ENCODE measurements at regions of chr3 and their contacts with region 1.

Region 1: DNA sequence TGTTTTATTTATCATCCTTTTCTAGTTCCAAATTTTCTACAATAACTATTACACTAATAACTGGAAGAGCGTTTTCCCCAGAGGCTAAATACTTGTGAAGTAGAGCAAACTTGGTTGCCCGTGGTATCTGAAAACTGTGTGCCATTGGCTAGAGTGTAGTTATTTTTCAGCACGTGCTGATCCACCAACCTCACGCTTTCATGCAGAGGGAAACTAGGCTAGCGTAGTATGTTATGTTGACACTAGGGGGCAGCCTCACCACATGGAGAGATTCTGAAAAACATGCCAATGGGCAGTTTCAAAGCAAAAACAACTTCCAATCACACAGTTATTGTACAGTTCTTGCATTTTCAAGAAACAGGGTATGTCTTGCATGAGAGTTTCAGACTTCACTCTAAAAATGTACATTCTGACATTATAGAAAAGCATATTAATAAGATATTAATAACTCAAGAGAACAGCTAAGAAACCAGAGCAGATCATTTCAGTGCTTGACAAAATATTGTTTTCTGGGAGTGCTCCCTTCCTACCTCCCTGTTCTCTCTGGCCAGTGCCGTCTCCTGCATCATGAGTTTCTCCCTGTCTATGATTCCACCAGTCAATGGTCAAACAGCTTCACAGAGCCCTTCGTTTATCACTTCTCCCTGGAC is 39.7 kb downstream of the SPATA12 start:
- DNase-seq: peak; percentile 58
- H3K4me3 ChIP-seq: no peak overlapping the region
- H3K27ac ChIP-seq: no peak overlapping the region
- H3K4me1 ChIP-seq: peaks cover 17% of the 10 kb centered on the region
- H3K27me3 ChIP-seq: no peaks in the 10 kb centered on the region
- CTCF ChIP-seq: peak; percentile 78 to 87

Region 2: GRCh38 chr3:57169872-57170623 is 69.9 kb after region 1 on chr3:
- CTCF ChIA-PET with region 1: no interaction called
- dilution Hi-C with region 1: no loop called
- in situ Hi-C with region 1: no loop called
- intact Hi-C with region 1: loop called (anchors 2 kb)
- DNase-seq: peak; percentile 48
- H3K4me3 ChIP-seq: peak overlapping the region; percentile 35 to 44 (median 41)
- H3K27ac ChIP-seq: no peak overlapping the region
- H3K4me1 ChIP-seq: peaks cover 5% of the 10 kb centered on the region
- H3K27me3 ChIP-seq: no peaks in the 10 kb centered on the region
- CTCF ChIP-seq: peak; percentile 46 to 79

Region 3: GRCh38 chr3:57221883-57222282 is 121.7 kb after region 1 on chr3:
- CTCF ChIA-PET with region 1: no interaction called
- dilution Hi-C with region 1: no loop called
- in situ Hi-C with region 1: no loop called
- intact Hi-C with region 1: loop called (anchors 1 kb)
- DNase-seq: no peak
- H3K4me3 ChIP-seq: no peak overlapping the region
- H3K27ac ChIP-seq: no peak overlapping the region
- H3K4me1 ChIP-seq: peaks cover 8% of the 10 kb centered on the region
- H3K27me3 ChIP-seq: no peaks in the 10 kb centered on the region
- CTCF ChIP-seq: peak in 1 of 2 donors; percentile 43

Region 4: GRCh38 chr3:57434041-57434440 is 333.9 kb after region 1 on chr3:
- CTCF ChIA-PET with region 1: interaction called, 24 read pairs
- dilution Hi-C with region 1: no loop called
- in situ Hi-C with region 1: no loop called
- intact Hi-C with region 1: loop called (anchors 1 kb)
- DNase-seq: peak; percentile 30
- H3K4me3 ChIP-seq: no peak overlapping the region
- H3K27ac ChIP-seq: no peak overlapping the region
- H3K4me1 ChIP-seq: no peaks in the 10 kb centered on the region
- H3K27me3 ChIP-seq: no peaks in the 10 kb centered on the region
- CTCF ChIP-seq: peak; percentile 61 to 71

Region 5: DNA sequence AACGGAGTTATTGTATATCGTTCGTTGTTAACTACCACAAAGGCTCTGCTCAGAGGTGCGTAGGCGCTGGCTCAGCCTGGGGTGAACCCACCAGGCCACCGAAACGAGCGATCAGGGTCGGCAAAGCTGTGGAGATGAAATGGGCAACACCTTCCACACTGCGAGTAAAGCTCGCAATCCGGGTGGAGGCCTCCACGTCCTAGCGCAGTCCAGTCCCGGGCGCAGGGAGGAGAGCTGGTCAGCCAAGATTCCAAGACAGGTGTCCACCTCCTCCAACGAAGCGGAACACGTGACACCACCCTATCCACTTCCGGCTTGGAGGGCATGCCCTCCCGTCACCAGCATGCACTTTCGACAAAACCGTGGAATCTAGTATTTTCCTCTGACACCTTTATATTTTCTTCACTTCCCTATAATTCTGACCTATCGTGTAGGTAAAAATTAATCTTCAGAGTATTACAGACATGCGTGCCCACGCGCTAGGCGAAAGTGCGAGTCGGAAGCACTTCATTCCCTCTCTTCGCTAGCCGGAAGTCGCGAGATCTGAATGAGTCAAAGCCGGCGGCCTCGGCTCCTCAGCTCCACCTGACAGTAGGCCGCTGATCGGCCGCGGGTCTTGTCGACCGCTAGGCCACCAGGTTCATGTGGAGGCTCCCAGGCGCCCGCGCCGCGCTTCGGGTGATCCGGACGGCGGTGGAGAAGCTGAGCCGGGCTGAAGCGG is 455.7 kb after region 1 on chr3 and contains the start of gene PDE12:
- CTCF ChIA-PET with region 1: no interaction called
- dilution Hi-C with region 1: no loop called
- in situ Hi-C with region 1: no loop called
- intact Hi-C with region 1: loop called (anchors 10 kb)
- DNase-seq: peak; percentile 92
- H3K4me3 ChIP-seq: peak within 1 kb of the TSS; percentile 61 to 81 (median 76)
- H3K27ac ChIP-seq: peak within 1 kb of the TSS; percentile 88
- H3K4me1 ChIP-seq: peaks cover 20% of the 10 kb centered on the region
- H3K27me3 ChIP-seq: no peaks in the 10 kb centered on the region
- CTCF ChIP-seq: peak in 1 of 2 donors; percentile 10
- total RNA-seq, gene PDE12: 22.4 to 26.7 TPM